ENCODE measurements at regions of chr14 and their contacts with region 1.

Region 1: GRCh38 chr14:35404449-35405303 is at the start of gene NFKBIA:
- DNase-seq: peak; percentile 94
- H3K4me3 ChIP-seq: peak within 1 kb of the TSS; percentile 69 to 92 (median 78)
- H3K27ac ChIP-seq: peak within 1 kb of the TSS; percentile 95
- H3K4me1 ChIP-seq: peaks cover 38% of the 10 kb centered on the region
- H3K27me3 ChIP-seq: no peaks in the 10 kb centered on the region
- CTCF ChIP-seq: peak; percentile 2 to 43
- total RNA-seq, gene NFKBIA: 81.0 to 86.7 TPM

Region 2: GRCh38 chr14:34554540-34555333 is 849.9 kb before region 1 on chr14:
- CTCF ChIA-PET with region 1: no interaction called
- dilution Hi-C with region 1: no loop called
- in situ Hi-C with region 1: loop called in 1 of 2 experiments (anchors 25 kb)
- intact Hi-C with region 1: no loop called
- DNase-seq: peak; percentile 95
- H3K4me3 ChIP-seq: no peak overlapping the region
- H3K27ac ChIP-seq: no peak overlapping the region
- H3K4me1 ChIP-seq: no peaks in the 10 kb centered on the region
- H3K27me3 ChIP-seq: no peaks in the 10 kb centered on the region
- CTCF ChIP-seq: no peak

Region 3: DNA sequence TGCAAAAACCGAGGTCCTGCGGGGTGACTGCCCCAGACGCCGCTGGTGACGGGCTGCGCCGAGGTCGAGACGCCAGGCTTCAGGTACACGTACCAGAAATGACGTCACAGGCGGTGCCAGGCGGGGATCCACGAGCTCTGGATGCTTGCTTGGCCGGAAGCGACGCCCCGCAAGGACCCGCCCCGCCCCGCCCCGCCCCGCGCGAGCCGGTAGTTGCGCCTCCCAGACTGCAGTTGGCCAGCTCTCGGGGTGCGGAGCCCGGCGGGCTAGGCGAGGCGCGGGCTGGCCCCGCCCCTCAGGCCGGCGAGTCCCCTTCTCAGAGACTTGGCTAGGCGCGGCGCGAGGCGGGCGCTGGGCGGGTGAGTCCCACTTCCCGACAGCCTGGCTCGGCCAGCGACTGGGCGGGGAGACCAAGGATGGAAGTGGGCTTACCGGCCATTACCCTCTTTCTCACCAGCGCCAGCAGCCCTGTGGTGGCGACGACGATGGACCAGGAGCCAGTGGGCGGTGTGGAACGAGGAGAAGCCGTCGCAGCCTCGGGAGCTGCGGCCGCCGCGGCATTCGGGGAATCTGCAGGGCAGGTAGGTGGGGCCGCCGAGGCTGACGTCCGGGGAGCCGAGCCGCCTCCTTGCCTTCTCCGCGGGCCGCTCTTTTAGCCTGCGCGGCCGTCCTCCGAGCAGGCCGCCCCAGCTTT is 358.5 kb before region 1 on chr14 and contains the start of gene FAM177A1:
- CTCF ChIA-PET with region 1: no interaction called
- dilution Hi-C with region 1: no loop called
- in situ Hi-C with region 1: no loop called
- intact Hi-C with region 1: loop called (anchors 5 kb)
- DNase-seq: peak; percentile 98
- H3K4me3 ChIP-seq: peak within 1 kb of the TSS; percentile 88 to 98 (median 91)
- H3K27ac ChIP-seq: peak within 1 kb of the TSS; percentile 97
- H3K4me1 ChIP-seq: peaks cover 11% of the 10 kb centered on the region
- H3K27me3 ChIP-seq: no peaks in the 10 kb centered on the region
- CTCF ChIP-seq: no peak
- total RNA-seq, gene FAM177A1: 30.2 to 84.2 TPM

Region 4: DNA sequence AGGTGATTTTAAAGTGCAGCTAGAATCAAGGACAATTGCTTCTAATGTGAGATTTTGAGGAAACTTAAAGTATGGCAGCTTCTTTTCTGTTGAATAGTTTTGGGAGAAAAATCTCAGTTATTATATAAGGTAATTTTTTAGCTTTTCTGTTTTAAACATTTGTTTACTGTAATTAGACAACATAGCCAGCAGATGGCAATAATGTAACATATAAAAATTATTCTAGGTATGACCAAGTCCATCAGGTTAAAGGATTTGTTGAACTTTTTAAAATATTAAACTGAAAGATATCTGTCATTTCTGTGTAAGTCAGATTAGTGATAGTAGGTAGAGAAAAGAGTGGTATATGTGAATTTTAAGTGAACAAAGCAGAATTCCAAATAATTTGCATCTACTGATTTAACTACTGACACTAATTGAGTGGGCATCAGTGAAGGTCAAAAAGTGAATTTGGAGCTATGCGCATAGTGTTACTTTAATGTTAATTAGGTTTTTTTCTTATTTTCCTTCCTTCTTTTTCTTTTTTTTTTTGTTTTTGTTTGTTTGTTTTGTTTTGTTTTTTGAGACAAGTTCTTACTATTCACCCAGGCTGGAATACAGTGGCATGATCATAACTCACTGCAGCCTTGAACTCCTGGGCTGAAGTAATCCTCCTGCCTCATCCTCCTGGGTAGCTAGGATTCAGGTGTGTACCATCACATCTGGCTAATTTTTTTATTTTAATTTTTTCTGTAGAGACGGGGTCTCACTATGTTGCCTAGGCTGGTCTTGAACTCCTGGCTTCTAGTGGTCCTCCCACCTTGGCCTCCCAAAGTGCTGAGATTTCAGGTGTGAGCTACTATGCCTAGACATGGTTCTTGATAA is 263.7 kb before region 1 on chr14:
- CTCF ChIA-PET with region 1: no interaction called
- dilution Hi-C with region 1: no loop called
- in situ Hi-C with region 1: loop called in 1 of 2 experiments (anchors 5 kb)
- intact Hi-C with region 1: loop called (anchors 1 kb)
- DNase-seq: no peak
- H3K4me3 ChIP-seq: no peak overlapping the region
- H3K27ac ChIP-seq: no peak overlapping the region
- H3K4me1 ChIP-seq: no peaks in the 10 kb centered on the region
- H3K27me3 ChIP-seq: no peaks in the 10 kb centered on the region
- CTCF ChIP-seq: peak; percentile 16 to 34

Region 5: GRCh38 chr14:35215110-35215876 is 189.4 kb before region 1 on chr14:
- CTCF ChIA-PET with region 1: interaction called, 5 read pairs
- dilution Hi-C with region 1: no loop called
- in situ Hi-C with region 1: loop called in 1 of 2 experiments (anchors 5 kb)
- intact Hi-C with region 1: loop called (anchors 1 kb)
- DNase-seq: peak; percentile 31
- H3K4me3 ChIP-seq: no peak overlapping the region
- H3K27ac ChIP-seq: peak overlapping the region; percentile 70
- H3K4me1 ChIP-seq: peaks cover 28% of the 10 kb centered on the region
- H3K27me3 ChIP-seq: no peaks in the 10 kb centered on the region
- CTCF ChIP-seq: peak; percentile 19 to 51

Region 6: GRCh38 chr14:35292051-35292769 is 112.5 kb before region 1 on chr14 and contains the start of gene PSMA6:
- CTCF ChIA-PET with region 1: no interaction called
- dilution Hi-C with region 1: no loop called
- in situ Hi-C with region 1: loop called in 1 of 2 experiments (anchors 10 kb)
- intact Hi-C with region 1: loop called (anchors 1 kb)
- DNase-seq: peak; percentile 99
- H3K4me3 ChIP-seq: peak within 1 kb of the TSS; percentile 70 to 91 (median 86)
- H3K27ac ChIP-seq: peak within 1 kb of the TSS; percentile 84
- H3K4me1 ChIP-seq: peaks cover 14% of the 10 kb centered on the region
- H3K27me3 ChIP-seq: no peaks in the 10 kb centered on the region
- CTCF ChIP-seq: no peak
- total RNA-seq, gene PSMA6: 128 to 181 TPM

Region 7: GRCh38 chr14:35374273-35374681 is 30.4 kb before region 1 on chr14:
- CTCF ChIA-PET with region 1: no interaction called
- dilution Hi-C with region 1: no loop called
- in situ Hi-C with region 1: no loop called
- intact Hi-C with region 1: loop called (anchors 1 kb)
- DNase-seq: peak; percentile 94
- H3K4me3 ChIP-seq: no peak overlapping the region
- H3K27ac ChIP-seq: peak overlapping the region; percentile 34
- H3K4me1 ChIP-seq: peaks cover 16% of the 10 kb centered on the region
- H3K27me3 ChIP-seq: no peaks in the 10 kb centered on the region
- CTCF ChIP-seq: no peak

Region 8: GRCh38 chr14:35446450-35446849 is 41.8 kb after region 1 on chr14:
- CTCF ChIA-PET with region 1: no interaction called
- dilution Hi-C with region 1: no loop called
- in situ Hi-C with region 1: no loop called
- intact Hi-C with region 1: no loop called
- DNase-seq: no peak
- H3K4me3 ChIP-seq: no peak overlapping the region
- H3K27ac ChIP-seq: no peak overlapping the region
- H3K4me1 ChIP-seq: no peaks in the 10 kb centered on the region
- H3K27me3 ChIP-seq: no peaks in the 10 kb centered on the region
- CTCF ChIP-seq: no peak

Region 9: DNA sequence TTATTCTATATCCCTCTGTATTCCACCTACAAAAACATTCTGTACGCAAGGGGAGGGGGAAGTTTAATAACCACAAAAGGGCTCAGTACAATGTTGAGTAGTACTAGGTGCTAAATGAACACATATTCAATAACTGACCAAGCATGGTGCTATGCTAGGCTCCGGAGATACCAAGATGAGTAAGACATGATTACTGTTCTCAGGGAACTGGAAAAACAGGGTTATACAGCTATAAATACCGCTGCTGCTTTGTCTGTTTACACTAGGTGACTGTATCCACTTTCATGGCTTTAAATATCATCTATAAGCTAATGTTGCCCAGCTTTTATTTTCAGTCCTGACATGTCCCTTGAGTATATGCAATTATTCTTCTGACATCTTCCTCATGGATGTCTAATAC is 265.1 kb after region 1 on chr14:
- CTCF ChIA-PET with region 1: no interaction called
- dilution Hi-C with region 1: no loop called
- in situ Hi-C with region 1: no loop called
- intact Hi-C with region 1: no loop called
- DNase-seq: peak; percentile 92
- H3K4me3 ChIP-seq: no peak overlapping the region
- H3K27ac ChIP-seq: peak overlapping the region; percentile 29
- H3K4me1 ChIP-seq: peaks cover 11% of the 10 kb centered on the region
- H3K27me3 ChIP-seq: no peaks in the 10 kb centered on the region
- CTCF ChIP-seq: no peak